ENCODE measurements at regions of chr3 and their contacts with region 1.

Region 1: DNA sequence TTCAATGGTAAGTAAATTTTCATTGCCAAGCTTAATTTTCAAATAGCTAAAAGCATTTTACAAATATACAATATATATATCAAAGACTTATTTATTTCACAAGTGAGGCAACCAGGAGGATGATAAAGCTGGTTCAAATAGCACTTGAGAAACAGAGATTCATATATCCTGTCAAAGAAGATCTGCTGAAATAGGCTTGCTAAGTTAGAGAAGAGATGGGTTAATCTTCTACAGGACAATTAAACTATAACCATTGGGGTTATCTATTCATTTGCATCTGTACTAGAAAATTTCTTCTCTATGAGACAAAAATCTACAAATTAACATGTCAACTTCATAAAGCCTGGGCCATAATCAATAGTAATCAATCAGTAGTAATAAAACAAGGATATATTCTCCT is 637.7 kb upstream of the UBE2E2 start:
- DNase-seq: no peak
- H3K4me3 ChIP-seq: no peak overlapping the region
- H3K27ac ChIP-seq: no peak overlapping the region
- H3K4me1 ChIP-seq: no peaks in the 10 kb centered on the region
- H3K27me3 ChIP-seq: no peaks in the 10 kb centered on the region
- CTCF ChIP-seq: no peak
- POLR2A ChIP-seq: no peak

Region 2: GRCh38 chr3:22908989-22909507 is 343.7 kb after region 1 on chr3:
- intact Hi-C with region 1: loop called (anchors 5 kb)
- DNase-seq: no peak
- H3K4me3 ChIP-seq: no peak overlapping the region
- H3K27ac ChIP-seq: no peak overlapping the region
- H3K4me1 ChIP-seq: no peaks in the 10 kb centered on the region
- H3K27me3 ChIP-seq: no peaks in the 10 kb centered on the region
- CTCF ChIP-seq: peak in 1 of 4 experiments; percentile 31
- POLR2A ChIP-seq: no peak

Region 3: DNA sequence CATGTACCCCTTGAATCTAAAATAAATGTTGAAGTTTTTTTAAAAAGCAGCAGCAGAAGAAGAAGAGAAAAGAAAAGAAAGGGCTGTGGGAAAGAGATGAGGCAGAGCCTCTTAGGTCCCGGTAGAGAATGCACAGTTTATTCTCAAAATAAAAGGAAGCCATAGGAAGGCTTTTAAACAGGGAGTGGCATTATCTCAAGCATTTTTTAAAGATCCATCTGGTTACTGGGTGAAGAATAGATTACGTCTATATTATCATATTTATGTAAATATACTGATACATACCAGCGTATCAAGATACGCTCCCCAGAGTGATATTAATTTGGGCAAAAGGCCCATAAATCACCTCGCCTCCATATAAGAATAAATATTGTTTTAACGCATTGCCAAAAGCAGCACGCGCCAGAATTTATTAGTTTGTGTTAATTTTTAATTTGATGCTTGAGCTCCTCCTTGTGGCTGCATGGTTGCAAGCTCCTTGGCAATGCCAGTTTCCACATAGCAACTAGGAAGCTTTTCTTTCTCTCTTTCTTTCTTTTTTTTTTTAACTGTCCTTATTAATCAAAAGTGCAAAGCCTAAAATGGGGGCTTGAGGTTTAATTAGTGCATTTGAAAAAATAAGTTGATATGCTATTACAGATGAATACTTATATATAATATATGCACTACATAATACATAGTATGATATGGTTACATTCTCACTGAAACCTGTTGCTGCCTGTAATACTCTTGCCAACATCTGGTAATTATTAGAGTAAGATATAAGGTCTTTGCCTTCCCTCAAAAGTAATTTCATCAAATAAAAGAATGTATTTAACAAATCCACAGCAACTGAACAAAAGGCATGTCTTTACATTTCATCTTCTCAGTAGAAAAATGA is 395.0 kb after region 1 on chr3:
- intact Hi-C with region 1: loop called (anchors 2 kb)
- DNase-seq: peak; percentile 57
- H3K4me3 ChIP-seq: no peak overlapping the region
- H3K27ac ChIP-seq: no peak overlapping the region
- H3K4me1 ChIP-seq: no peaks in the 10 kb centered on the region
- H3K27me3 ChIP-seq: no peaks in the 10 kb centered on the region
- CTCF ChIP-seq: peak; percentile 60 to 78 (median 68)
- POLR2A ChIP-seq: no peak

Region 4: DNA sequence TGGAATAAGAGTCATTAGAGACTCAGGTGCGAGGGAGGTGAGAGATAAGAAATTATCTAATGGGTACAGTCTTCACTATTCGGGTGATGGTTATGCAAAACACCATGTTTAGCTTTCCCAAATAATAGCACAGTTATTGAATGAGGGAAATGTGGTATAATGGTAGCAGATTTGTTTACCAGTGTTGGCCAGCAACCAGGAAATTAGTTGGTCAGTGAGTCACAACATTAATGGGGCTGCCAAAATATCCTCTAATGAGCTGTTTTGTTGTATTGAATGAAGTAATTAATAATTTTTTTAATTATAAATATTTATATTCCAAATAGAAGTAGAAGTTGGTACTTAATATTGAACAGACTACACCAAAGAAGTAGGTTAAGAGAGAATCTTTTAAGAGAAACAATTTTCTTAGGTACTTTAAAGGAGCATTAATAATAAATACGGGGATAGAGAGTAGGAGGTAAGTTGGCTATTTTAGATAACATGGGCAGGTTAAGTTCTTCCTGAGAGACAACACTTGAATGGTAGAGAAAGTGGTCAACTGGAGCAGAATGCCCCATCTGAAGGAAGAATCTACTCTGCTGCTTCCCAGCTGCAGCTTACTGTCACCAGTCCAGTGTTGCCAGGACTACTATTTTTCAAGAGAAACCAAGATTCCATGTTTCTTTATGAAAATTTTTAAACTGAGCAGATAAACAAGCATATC is 856.6 kb after region 1 on chr3:
- intact Hi-C with region 1: no loop called
- DNase-seq: no peak
- H3K4me3 ChIP-seq: no peak overlapping the region
- H3K27ac ChIP-seq: no peak overlapping the region
- H3K4me1 ChIP-seq: no peaks in the 10 kb centered on the region
- H3K27me3 ChIP-seq: no peaks in the 10 kb centered on the region
- CTCF ChIP-seq: no peak
- POLR2A ChIP-seq: no peak

Measured in prostate gland (tissue), 2 donors.